Activated CD4-positive, alpha-beta T cell treated with anti-CD3 and anti-CD28 coated beads, Interleukin-2, amount 10 ng/mL, durations not matched to agents 24 days and 14 days (primary cell): ENCODE measurements at regions of chr6 and their contacts with region 1.

Region 1: DNA sequence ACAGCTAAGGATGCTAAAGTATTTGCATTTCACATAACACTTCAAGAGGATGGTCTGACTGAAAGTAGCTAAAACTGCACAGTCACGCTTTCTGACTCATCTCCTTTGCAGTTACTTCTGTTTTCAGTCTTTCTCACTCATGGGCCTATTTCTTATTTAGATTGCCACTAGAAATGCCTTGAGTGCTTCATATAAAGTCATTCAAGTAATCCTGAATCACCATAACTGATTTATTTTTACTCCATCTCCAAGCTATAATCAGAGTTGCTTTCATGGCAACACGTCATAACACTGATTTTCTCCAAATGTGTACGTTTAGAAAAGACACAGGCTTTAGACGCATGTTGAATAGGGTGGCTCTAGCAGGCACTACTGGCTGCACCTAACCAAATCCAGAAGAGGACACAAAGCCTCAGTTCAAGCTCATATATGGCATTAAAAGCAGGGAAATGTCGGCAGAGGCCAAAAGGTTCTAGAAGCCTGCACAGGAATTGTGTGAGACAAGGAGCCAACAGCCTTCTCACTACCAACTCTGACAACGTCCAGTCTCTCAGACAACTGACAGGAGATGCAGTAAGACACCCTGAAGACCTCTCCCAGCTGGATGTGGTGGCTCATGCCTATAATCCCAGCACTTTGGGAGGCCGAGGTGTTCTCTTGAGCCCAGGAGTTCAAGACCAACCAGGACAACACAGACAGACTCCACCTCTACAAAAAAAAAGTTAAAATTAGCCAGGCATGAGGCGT is 64.1 kb upstream of the BEND6 start:
- DNase-seq: peak; percentile 66
- H3K4me3 Mint-ChIP-seq: no peak overlapping the region
- H3K27ac Mint-ChIP-seq: peak overlapping the region; percentile 49
- H3K4me1 Mint-ChIP-seq: peaks cover 25% of the 10 kb centered on the region
- H3K27me3 Mint-ChIP-seq: no peaks in the 10 kb centered on the region

Region 2: DNA sequence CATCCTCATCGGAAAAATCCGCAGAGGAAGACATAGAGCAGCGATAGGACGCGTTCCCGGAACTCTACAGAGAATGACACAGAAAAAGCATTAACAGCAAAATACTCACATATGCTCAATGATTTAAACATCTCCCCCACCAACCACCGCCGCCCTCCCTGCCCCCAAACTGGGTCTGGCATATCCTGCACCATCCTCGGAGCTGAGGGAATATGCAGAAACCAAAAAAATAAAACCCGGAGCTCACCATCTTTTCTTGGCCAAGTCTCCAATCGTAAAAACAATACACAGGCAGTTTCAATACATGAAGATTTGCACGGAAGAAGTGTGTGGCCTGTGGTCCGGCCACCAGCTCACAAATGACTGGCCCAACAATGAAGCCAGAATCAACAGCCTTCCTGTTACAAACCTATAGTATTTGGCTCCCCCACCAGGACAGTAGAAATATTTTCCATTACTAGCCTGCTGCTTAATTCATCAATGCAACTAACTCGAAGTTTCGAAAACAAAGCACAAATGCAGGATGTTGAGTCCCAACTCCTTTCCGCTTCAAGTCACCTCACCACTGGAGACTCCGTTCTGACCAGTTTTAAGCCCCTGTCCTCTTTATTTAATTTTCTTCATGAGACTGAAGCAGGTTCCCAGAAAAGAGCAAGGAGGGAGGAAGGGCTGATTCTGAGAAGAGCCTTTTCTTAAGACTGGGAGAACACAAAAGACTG is 39.2 kb before region 1 on chr6:
- intact Hi-C with region 1: loop called (anchors 5 kb)
- DNase-seq: peak; percentile 83
- H3K4me3 Mint-ChIP-seq: peak overlapping the region; percentile 85
- H3K27ac Mint-ChIP-seq: peak overlapping the region; percentile 81
- H3K4me1 Mint-ChIP-seq: peaks cover 25% of the 10 kb centered on the region
- H3K27me3 Mint-ChIP-seq: peaks cover 23% of the 10 kb centered on the region

Region 3: GRCh38 chr6:56927538-56928453 is 36.9 kb after region 1 on chr6:
- intact Hi-C with region 1: no loop called
- DNase-seq: no peak
- H3K4me3 Mint-ChIP-seq: no peak overlapping the region
- H3K27ac Mint-ChIP-seq: no peak overlapping the region
- H3K4me1 Mint-ChIP-seq: no peaks in the 10 kb centered on the region
- H3K27me3 Mint-ChIP-seq: peaks cover 36% of the 10 kb centered on the region

Region 4: GRCh38 chr6:57013521-57013926 is 122.7 kb after region 1 on chr6:
- intact Hi-C with region 1: no loop called
- DNase-seq: no peak
- H3K4me3 Mint-ChIP-seq: no peak overlapping the region
- H3K27ac Mint-ChIP-seq: no peak overlapping the region
- H3K4me1 Mint-ChIP-seq: no peaks in the 10 kb centered on the region
- H3K27me3 Mint-ChIP-seq: peaks cover 23% of the 10 kb centered on the region

Region 5: GRCh38 chr6:57137350-57137749 is 246.5 kb after region 1 on chr6:
- intact Hi-C with region 1: no loop called
- DNase-seq: no peak
- H3K4me3 Mint-ChIP-seq: no peak overlapping the region
- H3K27ac Mint-ChIP-seq: peak overlapping the region; percentile 4
- H3K4me1 Mint-ChIP-seq: peaks cover 8% of the 10 kb centered on the region
- H3K27me3 Mint-ChIP-seq: no peaks in the 10 kb centered on the region